K562 (cell line): ENCODE measurements at regions of chr7 and their contacts with region 1.

Region 1: GRCh38 chr7:81209059-81209458 is 290.2 kb upstream of the SEMA3C start:
- DNase-seq: peak; percentile 46 to 80 (median 54)
- ATAC-seq: peak; percentile 79
- H3K4me3 ChIP-seq: no peak overlapping the region; the same call in 1 of the 2 replicates
- H3K27ac ChIP-seq: peak overlapping the region; percentile 84
- H3K4me1 ChIP-seq: peaks cover 0 to 8% of the 10 kb centered on the region in 2 experiments; a peak in 2 of 5 replicates
- H3K27me3 ChIP-seq: no peaks in the 10 kb centered on the region
- CTCF ChIP-seq: no peak
- EP300 ChIP-seq: peak; percentile 93
- POLR2A ChIP-seq: no peak
- RAD21 ChIP-seq: no peak

Region 2: DNA sequence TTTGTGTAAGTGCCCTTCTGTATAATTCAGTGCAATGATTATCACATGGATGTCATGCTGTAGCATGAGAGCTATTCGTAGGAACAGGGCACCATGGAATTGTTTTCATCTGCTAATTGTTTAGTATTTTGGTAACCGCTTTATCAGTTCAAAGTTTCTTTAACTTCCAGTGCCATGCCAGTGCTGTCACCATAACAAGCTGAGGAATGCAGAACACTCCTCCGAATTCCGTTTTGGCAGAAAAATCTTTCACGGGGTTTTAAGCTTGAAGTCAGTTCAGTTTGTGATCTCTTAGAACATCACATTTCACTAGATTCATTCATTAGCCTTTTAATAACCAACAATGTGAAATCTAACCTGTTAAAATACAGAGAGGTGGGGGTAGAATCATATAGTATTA is 173.0 kb before region 1 on chr7:
- CTCF ChIA-PET with region 1: no interaction called
- POLR2A ChIA-PET with region 1: no interaction called
- in situ Hi-C with region 1: no loop called
- intact Hi-C with region 1: no loop called
- DNase-seq: no peak
- ATAC-seq: no peak
- H3K4me3 ChIP-seq: no peak overlapping the region
- H3K27ac ChIP-seq: no peak overlapping the region
- H3K4me1 ChIP-seq: no peaks in the 10 kb centered on the region
- H3K27me3 ChIP-seq: no peaks in the 10 kb centered on the region
- CTCF ChIP-seq: no peak
- EP300 ChIP-seq: no peak
- POLR2A ChIP-seq: no peak
- RAD21 ChIP-seq: no peak

Region 3: DNA sequence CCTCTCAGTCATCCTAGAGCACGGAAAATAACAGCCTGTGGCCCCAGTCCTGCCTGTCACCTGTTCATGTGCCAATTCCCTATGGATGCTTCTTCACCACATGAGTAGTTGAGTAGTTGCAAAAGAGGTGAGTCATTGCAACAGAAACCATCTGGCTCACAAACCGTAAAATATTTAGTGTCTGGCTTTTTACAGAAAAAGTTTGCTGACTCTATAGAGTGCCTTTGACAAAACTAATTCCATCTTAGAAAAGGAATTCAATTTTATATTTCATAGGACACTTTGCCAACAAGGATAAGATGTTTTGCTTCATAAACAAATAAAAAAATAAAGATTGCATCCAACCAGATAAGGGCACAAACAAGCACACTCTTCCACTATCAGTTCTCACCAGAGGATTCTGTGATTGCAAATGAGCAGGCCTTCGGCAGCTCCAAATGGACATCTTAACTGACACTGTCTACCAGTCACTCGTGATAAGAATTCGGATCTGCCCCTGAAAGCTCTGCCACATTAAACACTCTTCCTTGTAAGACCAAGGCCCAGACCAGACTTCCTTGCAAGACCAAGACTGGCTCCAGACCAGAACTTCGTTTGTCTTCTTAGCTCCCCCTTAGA is 47.5 kb before region 1 on chr7:
- CTCF ChIA-PET with region 1: no interaction called
- POLR2A ChIA-PET with region 1: no interaction called
- in situ Hi-C with region 1: no loop called
- intact Hi-C with region 1: loop called (anchors 5 kb)
- DNase-seq: peak; percentile 32 to 84 (median 49)
- ATAC-seq: peak; percentile 88
- H3K4me3 ChIP-seq: no peak overlapping the region
- H3K27ac ChIP-seq: peak overlapping the region; percentile 76
- H3K4me1 ChIP-seq: peaks cover 0 to 14% of the 10 kb centered on the region in 2 experiments; a peak in 2 of 5 replicates
- H3K27me3 ChIP-seq: no peaks in the 10 kb centered on the region
- CTCF ChIP-seq: no peak
- EP300 ChIP-seq: peak; percentile 83; the same call in 1 of the 2 replicates
- POLR2A ChIP-seq: no peak
- RAD21 ChIP-seq: no peak

Region 4: GRCh38 chr7:81308643-81309322 is 99.7 kb after region 1 on chr7:
- CTCF ChIA-PET with region 1: no interaction called
- POLR2A ChIA-PET with region 1: no interaction called
- in situ Hi-C with region 1: no loop called
- intact Hi-C with region 1: no loop called
- DNase-seq: no peak
- ATAC-seq: no peak
- H3K4me3 ChIP-seq: no peak overlapping the region
- H3K27ac ChIP-seq: no peak overlapping the region
- H3K4me1 ChIP-seq: no peaks in the 10 kb centered on the region
- H3K27me3 ChIP-seq: no peaks in the 10 kb centered on the region
- CTCF ChIP-seq: no peak
- EP300 ChIP-seq: no peak
- POLR2A ChIP-seq: no peak
- RAD21 ChIP-seq: no peak